ENCODE measurements at regions of chr9 and their contacts with region 1.

Region 1: DNA sequence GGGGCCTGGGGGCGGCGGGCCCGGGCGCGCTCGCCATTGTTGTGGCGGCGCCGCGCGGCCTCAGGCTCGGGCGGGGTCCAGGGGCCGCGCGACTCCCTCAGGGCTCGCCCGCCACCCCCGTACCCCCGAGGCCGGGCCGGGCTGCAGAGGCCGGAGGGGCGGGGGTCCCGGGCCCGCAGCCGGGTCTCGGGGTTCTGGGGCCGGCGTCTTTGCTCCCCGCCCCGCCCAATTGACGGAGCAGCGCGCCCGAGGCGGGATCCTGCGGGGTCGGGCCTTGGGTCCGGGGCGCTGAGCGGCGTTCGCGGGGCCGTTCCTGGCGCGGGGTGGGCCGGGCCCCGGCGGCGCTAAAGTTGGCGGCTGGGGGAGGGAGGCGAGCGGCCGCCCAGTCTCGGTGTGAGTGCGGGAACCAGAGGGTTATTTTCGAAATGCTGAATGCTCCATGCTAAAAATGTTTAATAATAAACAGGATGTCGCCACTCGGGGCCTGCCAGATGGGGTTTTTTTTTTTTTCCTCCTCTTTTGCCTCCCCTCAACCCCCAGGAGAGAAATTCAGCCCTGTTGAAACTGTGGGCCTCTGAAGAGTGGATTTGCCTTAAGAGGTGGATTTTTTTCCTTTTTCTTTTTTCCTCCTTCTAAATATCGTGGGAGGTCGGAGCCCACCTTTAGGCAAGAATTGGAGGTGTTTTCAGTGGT is 724 bp downstream of the PRRC2B start:
- DNase-seq: peak; percentile 82
- ATAC-seq: peak; percentile 17
- H3K4me3 Mint-ChIP-seq: peak overlapping the region; percentile 94
- H3K27ac Mint-ChIP-seq: peak overlapping the region; percentile 95
- H3K4me1 Mint-ChIP-seq: peaks cover 40% of the 10 kb centered on the region
- H3K27me3 Mint-ChIP-seq: no peaks in the 10 kb centered on the region

Region 2: GRCh38 chr9:131290039-131290766 is 104.4 kb before region 1 on chr9:
- POLR2A ChIA-PET with region 1: no interaction called
- DNase-seq: no peak
- ATAC-seq: no peak
- H3K4me3 Mint-ChIP-seq: no peak overlapping the region
- H3K27ac Mint-ChIP-seq: no peak overlapping the region
- H3K4me1 Mint-ChIP-seq: peaks cover 2% of the 10 kb centered on the region
- H3K27me3 Mint-ChIP-seq: peaks cover 2% of the 10 kb centered on the region

Region 3: DNA sequence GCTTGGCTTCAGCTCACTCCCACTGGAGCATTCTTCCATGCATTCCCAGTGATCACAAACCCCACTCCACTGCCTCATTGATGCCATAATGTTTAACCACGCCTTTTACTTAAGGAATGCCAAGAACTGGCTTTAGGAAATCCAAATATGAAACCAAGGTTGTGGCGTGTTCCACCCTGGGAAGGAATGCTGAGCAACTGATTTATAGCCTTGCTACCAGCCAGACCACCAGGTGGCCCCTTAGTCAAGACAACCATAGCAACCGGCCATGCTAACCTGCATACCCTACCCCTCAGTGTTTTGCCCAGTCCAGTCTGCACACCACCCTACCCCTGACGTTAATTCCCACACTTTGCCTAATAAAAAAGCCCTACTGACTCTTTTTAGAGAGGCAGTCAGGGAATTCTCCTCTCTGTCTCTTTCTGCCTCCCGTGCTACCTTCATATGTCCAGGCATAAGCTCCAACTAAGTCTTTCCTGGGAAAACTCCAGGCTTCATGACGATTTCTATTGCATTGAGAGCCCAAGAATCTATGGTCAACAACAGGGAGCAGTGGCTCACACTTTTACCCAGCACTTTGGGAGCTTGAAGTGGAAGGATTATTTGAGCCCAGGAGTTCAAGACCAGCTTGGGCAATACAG is 27.7 kb before region 1 on chr9:
- POLR2A ChIA-PET with region 1: interaction called, 15 read pairs
- DNase-seq: no peak
- ATAC-seq: no peak
- H3K4me3 Mint-ChIP-seq: no peak overlapping the region
- H3K27ac Mint-ChIP-seq: no peak overlapping the region
- H3K4me1 Mint-ChIP-seq: peaks cover 4% of the 10 kb centered on the region
- H3K27me3 Mint-ChIP-seq: no peaks in the 10 kb centered on the region

Region 4: DNA sequence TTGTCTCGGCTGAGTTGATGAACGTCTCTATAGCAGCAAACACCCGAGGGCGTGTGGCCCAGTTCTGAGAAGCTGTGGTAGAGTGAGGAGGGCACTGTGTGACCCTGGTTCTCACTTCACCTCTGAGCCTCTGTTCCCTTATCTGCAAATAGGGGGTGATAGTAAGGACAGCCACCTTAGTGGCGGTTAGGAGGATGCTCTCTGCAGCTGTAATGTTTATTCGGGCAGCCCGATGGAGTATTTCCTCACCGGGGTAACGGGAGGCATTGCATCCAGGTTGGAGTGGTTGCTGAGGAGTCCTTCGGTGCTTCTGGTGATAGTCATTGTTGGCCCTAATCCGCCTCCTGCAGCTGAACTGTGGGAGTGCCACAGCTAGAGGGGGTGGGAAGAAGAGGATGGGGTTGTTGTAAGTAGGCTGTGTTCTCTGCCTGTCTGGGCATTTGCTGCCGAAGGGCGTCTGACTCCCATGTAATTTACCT is 13.1 kb after region 1 on chr9:
- POLR2A ChIA-PET with region 1: interaction called, 104 read pairs
- DNase-seq: peak; percentile 56
- ATAC-seq: peak; percentile 70
- H3K4me3 Mint-ChIP-seq: peak overlapping the region; percentile 81
- H3K27ac Mint-ChIP-seq: peak overlapping the region; percentile 88
- H3K4me1 Mint-ChIP-seq: peaks cover 80% of the 10 kb centered on the region
- H3K27me3 Mint-ChIP-seq: no peaks in the 10 kb centered on the region

Region 5: DNA sequence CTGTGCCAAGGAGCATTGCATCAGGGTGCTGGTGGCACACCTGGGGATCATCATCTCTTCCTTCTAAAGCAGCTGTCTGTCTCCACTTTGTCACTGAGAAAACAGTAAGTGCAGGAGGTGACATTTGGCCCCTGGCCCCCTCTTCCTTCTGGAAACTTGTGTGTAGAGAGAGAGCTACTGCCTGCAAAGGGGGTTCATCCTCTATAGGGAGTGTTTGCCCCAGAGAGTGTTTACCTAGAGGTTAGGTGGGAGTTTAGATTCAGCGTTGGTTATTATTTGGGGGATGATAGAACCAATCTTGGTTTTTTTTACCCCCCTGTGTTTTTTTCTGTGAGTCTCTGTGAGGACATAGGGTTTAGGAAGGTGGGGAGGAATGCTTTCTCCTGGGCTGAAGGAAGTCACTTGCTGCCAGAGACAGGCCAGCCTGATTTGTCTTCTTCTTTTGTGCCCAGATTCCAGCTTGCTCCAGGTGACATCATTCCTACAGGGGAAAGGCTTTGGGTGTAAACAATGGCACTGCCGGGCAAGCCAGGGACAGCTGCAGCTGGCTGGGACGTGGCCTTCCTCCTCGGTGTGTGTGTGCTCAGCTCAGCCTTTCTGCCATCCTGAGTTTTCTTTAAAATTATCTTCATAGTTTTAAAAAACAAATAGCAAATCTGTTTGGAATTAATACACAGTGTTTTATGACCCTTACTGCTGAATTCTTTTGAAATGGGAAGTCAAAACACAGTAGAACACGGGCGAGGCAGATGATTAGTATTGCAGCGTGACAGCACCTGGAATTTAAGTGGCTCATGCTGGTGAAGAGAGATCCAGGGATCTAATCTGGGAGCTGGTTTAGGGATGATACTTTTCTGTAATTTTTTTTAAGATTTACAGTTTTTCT is 23.8 kb after region 1 on chr9:
- POLR2A ChIA-PET with region 1: interaction called, 12 read pairs
- DNase-seq: no peak
- ATAC-seq: peak; percentile 3
- H3K4me3 Mint-ChIP-seq: peak overlapping the region; percentile 80
- H3K27ac Mint-ChIP-seq: peak overlapping the region; percentile 78
- H3K4me1 Mint-ChIP-seq: peaks cover 79% of the 10 kb centered on the region
- H3K27me3 Mint-ChIP-seq: no peaks in the 10 kb centered on the region

Measured in activated naive CD8-positive, alpha-beta T cell treated with anti-CD3 and anti-CD28 coated beads, Interleukin-2, amount 10 ng/mL, durations not matched to agents 7 days and 5 days (primary cell).